ENCODE measurements at regions of chr12 and their contacts with region 1.

Region 1: DNA sequence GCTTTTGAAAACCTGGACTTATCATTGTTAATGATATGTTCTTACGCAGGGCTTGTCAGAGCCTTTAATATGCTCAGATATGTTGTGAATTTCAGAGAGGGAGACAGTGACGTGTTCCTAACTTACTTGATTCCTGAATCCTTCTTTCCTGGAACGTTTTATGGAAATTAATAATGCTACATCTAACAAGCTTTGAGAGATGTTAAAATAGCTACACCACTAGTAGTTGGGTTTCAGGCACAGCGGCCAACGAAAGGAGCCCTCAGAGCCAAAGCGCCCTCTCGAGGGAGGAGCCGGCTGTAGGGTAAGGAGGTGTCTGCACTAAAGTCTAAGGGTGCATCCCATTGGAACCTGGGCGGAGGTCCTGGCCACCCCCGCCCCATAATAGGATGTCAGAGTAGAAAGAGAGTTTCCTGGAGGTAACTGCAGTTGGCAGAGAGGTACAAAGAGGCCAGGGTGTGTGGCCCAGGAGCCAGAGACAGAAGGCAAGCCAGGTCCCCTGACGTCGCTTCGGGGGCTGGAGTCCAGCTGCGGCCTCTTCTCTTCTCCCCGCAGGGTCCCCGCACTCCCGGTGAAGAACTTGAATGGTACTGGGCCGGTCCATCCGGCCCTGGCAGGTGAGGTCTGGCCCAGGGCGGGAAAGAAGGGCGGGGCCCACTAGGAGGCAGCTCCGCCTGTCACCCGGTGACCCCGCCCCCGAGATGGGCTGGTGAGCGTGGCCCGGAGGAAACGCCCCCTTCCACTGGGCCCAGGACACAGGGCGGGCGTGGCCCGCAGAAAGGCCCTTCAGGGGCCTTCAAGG is 36.3 kb downstream of the DTX1 start:
- DNase-seq: peak in 1 of 2 donors; percentile 41
- ATAC-seq: peak in 4 of 8 donors; percentile 23 to 54 (median 31)
- H3K4me3 ChIP-seq: peak overlapping the region in 1 of 10 donors; percentile 9
- H3K27ac ChIP-seq: no peak overlapping the region
- H3K4me1 ChIP-seq: peaks cover 0 to 11% (median 5%) of the 10 kb centered on the region in 9 donors
- H3K27me3 ChIP-seq: peaks cover 0 to 63% (median 38%) of the 10 kb centered on the region in 7 donors
- CTCF ChIP-seq: peak in 4 of 9 donors; percentile 18 to 24 (median 20)

Region 2: DNA sequence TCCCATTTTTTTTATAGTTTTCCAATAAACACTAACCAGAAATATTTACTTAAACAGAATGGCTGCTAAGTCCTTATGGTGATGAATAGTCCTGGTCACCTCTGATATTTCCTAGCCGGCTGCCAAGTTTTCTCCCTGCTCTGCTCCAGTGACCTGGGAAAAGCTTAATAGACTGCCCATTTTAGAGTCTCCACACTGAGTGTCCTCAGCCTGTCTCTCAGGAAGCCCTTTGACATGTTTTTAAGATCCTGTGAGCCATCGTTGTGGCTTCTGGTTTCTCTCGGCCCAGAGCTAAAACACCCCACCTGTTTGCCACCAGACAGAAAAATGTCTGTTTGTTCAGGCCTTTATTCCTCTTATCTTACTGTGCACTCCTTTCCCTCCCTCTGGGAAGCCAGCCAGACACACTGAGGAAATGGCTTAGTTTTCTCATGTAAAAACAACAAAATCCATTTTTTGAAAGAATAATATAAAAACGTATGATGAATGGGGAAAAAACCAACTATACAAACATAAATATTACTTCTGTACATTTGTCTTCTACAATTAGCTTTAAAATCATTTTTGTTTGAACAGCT is 1351.5 kb before region 1 on chr12:
- intact Hi-C with region 1: no loop called
- DNase-seq: no peak
- ATAC-seq: peak in 7 of 8 donors; percentile 39 to 82 (median 70)
- H3K4me3 ChIP-seq: no peak overlapping the region
- H3K27ac ChIP-seq: peak overlapping the region in 5 of 10 donors; percentile 21 to 58 (median 38)
- H3K4me1 ChIP-seq: peaks cover 0 to 15% (median 12%) of the 10 kb centered on the region in 9 donors
- H3K27me3 ChIP-seq: no peaks in the 10 kb centered on the region
- CTCF ChIP-seq: no peak

Region 3: GRCh38 chr12:113056631-113057488 is 35.9 kb before region 1 on chr12 and contains the start of gene DTX1:
- intact Hi-C with region 1: loop called in 1 of 10 experiments (anchors 5 kb)
- DNase-seq: peak; percentile 41 to 45
- ATAC-seq: peak; percentile 51 to 82 (median 68)
- H3K4me3 ChIP-seq: peak within 1 kb of the TSS; percentile 41 to 66 (median 60)
- H3K27ac ChIP-seq: peak within 1 kb of the TSS in 7 of 10 donors; percentile 19 to 56 (median 48)
- H3K4me1 ChIP-seq: peaks cover 0 to 16% (median 14%) of the 10 kb centered on the region in 9 donors
- H3K27me3 ChIP-seq: peaks cover 0 to 85% (median 46%) of the 10 kb centered on the region in 7 donors
- CTCF ChIP-seq: peak in 1 of 9 donors; percentile 10
- total RNA-seq, gene DTX1: 0.94 to 6.4 (median 1.8) TPM

Region 4: GRCh38 chr12:113601656-113602263 is 509.0 kb after region 1 on chr12:
- intact Hi-C with region 1: no loop called
- DNase-seq: no peak
- ATAC-seq: no peak
- H3K4me3 ChIP-seq: no peak overlapping the region
- H3K27ac ChIP-seq: no peak overlapping the region
- H3K4me1 ChIP-seq: no peaks in the 10 kb centered on the region
- H3K27me3 ChIP-seq: peaks cover 0 to 50% (median 24%) of the 10 kb centered on the region in 7 donors
- CTCF ChIP-seq: no peak

Measured in heart right ventricle (tissue), 16 donors.